Right ventricle myocardium inferior (tissue), 1 donor: ENCODE measurements at regions of chr6 and their contacts with region 1.

Region 1: DNA sequence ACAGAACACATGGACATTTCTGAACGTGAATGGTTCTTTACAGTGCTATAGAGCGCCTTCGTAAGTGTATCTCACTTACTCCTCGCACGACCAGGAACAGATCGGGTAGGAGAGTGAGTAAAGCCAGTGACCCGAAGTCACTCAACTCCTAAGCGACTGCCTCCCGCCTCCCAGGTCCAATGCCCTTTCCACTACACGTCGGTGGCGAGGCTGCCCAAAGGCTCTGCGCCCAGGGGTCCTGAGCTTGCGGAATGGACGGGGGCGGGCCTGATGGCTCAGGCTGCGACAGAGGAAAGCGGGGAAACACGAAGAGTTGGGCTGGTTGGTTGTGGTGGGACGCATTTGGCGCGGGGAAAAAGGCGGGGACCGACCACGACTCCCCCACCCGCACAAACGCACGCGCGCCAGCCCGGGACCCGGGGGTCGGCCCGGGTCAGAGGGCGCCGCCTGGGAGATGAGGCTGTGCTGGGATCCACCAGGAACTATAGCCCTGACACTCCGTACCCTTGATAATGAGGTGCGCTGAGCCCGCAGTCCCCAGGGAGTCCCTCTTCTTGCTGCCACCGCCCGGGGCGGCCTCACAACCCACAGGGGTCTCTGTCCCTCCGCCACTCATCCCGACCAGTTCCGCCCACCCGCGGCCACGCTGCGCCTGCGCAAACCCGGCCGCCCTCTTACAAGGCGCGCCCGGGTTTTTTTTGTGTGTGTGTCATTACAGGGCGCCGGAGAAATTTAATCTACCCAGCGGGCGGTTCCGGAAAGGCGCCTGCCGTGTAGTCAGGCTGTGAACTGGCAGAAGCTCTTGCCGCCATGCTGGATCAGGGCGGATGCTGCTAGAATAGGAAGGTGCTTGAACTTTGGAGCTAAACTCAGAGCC is at the start of gene BLOC1S5:
- DNase-seq: peak; percentile 98
- ATAC-seq: peak; percentile 99
- total RNA-seq, gene BLOC1S5: 8.1 TPM

Region 2: GRCh38 chr6:7910654-7911344 is 153.2 kb before region 1 on chr6 and contains the start of gene TXNDC5:
- intact Hi-C with region 1: loop called (anchors 5 kb)
- DNase-seq: peak; percentile 92
- ATAC-seq: peak; percentile 86
- total RNA-seq, gene TXNDC5: 42.0 TPM

Region 3: GRCh38 chr6:8006208-8006607 is 57.8 kb before region 1 on chr6:
- intact Hi-C with region 1: loop called (anchors 5 kb)
- DNase-seq: no peak
- ATAC-seq: no peak

Region 4: DNA sequence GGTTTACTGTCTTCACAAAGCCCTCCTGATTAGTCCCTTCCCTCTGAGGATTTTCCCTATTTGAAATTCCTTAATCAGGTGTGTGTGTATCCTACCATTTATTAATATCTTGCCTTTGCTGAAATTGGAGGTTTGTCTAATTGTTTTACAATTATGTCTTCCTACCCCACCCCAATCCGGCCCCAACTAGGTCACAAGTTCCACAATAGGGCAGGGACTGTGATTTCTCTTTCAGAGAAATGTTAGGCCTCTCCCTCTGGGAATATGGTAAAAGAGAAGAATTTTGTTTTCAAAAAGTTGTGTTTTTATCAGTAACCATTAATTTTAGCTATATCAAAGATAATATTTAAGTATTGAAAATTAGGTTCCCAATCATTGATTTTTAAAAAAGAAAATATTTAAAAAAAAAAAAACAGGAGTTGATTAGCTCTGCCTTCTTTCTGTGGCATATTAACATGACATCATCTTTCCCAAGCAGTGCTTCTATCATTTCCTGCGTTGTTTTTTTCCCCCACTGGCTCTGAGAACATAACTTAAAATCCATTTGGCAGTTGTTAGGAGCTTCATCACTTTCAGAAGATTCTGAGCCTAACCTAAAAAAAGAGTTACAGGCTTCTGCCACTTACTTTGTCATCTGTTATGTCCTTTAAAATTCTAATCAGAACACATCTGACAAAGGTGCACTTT is 35.9 kb before region 1 on chr6:
- intact Hi-C with region 1: loop called (anchors 5 kb)
- DNase-seq: no peak
- ATAC-seq: peak; percentile 50